A549 (cell line): ENCODE measurements at regions of chr2 and their contacts with region 1.

Region 1: DNA sequence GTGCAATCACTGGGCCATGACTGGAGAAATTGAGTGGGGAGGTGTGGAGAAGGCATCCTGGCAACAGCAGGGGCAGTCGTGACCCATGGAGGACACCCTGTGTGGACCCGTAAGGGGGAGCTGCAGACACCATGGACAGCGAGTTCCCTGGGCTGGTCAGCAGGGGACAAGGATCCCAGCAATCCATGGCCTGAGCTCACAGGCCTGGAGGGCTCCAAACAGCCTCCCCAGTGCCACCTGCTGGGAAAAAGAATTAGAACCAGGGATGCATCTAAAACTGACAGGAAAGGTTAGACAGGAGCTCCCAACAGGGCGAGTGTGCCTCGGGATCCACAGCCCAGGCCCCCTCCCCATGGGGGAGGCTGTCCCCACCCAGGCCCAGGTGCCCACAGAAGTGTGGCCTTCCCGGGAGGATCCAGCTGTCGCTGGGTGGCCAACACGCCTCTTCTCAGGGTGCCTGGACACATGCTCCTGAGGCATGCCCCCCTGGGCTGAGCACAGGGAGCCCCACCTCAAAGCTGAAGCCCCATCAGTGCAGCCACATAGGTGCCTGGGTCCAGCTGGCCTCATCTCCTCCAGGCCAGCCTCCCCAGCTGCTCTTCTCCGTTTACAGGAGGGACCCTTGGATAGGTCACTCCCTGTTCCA is 20.5 kb upstream of the KIF1A start:
- DNase-seq: peak; percentile 80 to 82
- ATAC-seq: peak; percentile 86 to 95
- H3K4me3 ChIP-seq: no peak overlapping the region
- H3K27ac ChIP-seq: no peak overlapping the region
- H3K4me1 ChIP-seq: 0 out of 3 replicates have a peak, but pooled peaks cover 3% of the 10 kb centered on the region
- CTCF ChIP-seq: peak; percentile 69
- EP300 ChIP-seq: no peak
- POLR2A ChIP-seq: no peak
- RAD21 ChIP-seq: peak; percentile 69 to 80

Region 2: DNA sequence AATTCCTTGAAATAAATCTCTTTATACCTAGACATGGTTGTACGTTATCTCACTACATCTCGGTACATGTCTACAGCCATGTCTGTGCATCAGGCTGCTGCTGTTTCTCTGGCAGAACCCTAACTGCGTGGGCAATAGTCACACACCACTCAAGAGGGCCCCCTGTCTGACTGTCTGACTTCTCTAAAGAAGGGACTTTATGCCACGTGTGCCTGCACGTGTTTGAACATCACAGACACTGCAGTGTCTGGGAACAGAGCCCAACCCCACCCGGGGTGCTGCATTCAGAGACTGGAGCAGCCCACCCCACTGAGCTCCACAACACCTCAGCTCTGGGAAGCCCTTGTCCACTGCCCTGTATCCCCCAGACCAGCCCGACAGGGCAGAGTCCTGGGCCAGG is 75.6 kb before region 1 on chr2:
- CTCF ChIA-PET with region 1: no interaction called
- POLR2A ChIA-PET with region 1: no interaction called
- DNase-seq: no peak
- ATAC-seq: no peak
- H3K4me3 ChIP-seq: no peak overlapping the region
- H3K27ac ChIP-seq: no peak overlapping the region
- H3K4me1 ChIP-seq: no peaks in the 10 kb centered on the region
- CTCF ChIP-seq: no peak
- EP300 ChIP-seq: no peak
- POLR2A ChIP-seq: no peak
- RAD21 ChIP-seq: no peak

Region 3: DNA sequence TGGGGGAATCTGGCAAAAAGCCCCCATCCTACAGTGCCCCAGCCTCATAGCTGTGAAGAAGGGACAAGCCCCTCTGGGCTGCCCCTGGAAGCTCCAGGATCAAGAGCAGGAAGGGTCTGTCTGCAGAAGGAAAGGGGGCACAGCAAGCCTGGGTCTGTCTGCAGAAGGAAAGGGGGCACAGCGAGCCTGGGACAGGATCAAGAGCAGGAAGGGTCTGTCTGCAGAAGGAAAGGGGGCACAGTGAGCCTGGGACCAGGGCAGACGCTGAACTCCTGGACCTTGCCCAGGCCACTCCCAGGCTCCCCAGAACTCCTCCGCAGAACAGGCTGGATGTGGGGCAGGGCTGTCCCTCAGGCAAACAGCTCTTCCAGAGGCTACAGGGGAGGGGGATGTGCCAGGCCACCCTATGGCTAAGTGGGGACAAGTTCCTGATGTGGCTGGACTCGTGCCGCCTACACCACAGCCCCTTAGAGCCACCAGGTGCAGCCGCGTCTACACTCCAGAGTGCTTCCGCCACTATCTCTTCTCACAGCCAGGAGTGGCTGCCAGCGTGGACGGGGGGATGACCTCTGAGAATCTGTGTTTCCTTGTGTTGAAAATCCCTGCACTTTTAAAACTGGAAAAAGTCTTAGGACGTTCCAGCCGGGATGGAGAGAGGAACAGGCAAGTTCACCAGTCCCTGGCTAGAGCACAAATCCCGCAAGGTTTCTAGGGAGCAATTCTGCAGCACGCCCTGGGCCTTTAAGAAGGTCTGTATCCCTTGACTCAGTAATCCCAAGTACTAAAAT is 41.3 kb before region 1 on chr2:
- CTCF ChIA-PET with region 1: interaction called, 20 read pairs
- POLR2A ChIA-PET with region 1: no interaction called
- DNase-seq: no peak
- ATAC-seq: no peak
- H3K4me3 ChIP-seq: no peak overlapping the region
- H3K27ac ChIP-seq: no peak overlapping the region
- H3K4me1 ChIP-seq: no peaks in the 10 kb centered on the region
- CTCF ChIP-seq: no peak
- EP300 ChIP-seq: no peak
- POLR2A ChIP-seq: no peak
- RAD21 ChIP-seq: no peak

Region 4: DNA sequence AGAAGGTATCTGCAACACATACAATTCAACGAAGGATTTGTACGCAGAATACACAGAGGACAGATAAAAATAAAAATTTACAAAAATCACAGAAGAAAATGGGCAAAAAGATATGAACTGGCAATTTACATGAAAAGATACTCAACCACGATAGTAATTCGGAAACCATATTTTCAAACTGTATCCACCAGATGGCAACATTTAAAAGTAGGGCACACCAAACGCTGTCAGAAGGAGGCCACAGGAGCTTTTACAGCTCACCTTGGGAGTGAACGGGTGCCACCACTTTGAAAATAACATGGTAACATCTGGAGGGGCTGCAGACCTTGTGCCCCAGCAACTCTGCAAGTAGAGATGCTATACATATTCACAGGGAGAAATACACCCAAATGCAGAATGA is 30.4 kb before region 1 on chr2:
- CTCF ChIA-PET with region 1: interaction called, 20 read pairs
- POLR2A ChIA-PET with region 1: no interaction called
- DNase-seq: peak in 1 of 2 experiments; percentile 27
- ATAC-seq: peak in 1 of 2 experiments; percentile 70; a peak in 2 of 6 replicates
- H3K4me3 ChIP-seq: no peak overlapping the region
- H3K27ac ChIP-seq: no peak overlapping the region
- H3K4me1 ChIP-seq: no peaks in the 10 kb centered on the region
- CTCF ChIP-seq: peak; percentile 39; the same call in 2 of the 3 replicates
- EP300 ChIP-seq: no peak
- POLR2A ChIP-seq: no peak
- RAD21 ChIP-seq: 0 out of 5 replicates have a peak, but pooled peaks of 1 of the 2 experiments have one; percentile 23

Region 5: DNA sequence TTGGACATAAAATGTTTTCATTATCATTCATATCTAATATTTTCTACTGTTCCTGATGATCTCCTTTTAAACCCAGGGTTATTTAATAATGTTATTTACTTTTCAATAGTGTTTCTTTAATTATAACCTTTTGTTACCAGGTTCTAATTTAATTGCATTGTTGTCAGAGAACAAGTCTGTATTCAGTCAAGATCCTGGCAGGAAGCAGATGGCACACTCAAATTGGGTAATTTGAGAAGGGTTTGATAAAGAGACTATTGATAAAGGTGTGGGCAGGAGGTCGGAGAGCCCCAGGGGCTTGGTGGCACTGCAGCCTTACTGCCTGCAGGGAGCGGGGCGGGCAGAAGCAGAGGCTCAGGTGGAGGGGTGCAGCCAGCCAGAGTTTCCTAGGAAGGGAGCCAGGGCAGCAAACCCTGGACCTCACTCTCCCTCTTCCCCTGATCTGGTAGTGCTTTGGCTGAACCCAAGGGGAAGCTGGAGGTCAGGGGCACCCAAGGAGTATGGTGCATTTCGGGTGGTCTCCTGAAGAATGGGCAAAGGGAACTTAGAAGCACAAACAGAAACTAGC is 18.2 kb before region 1 on chr2:
- CTCF ChIA-PET with region 1: interaction called, 37 read pairs
- POLR2A ChIA-PET with region 1: no interaction called
- DNase-seq: no peak
- ATAC-seq: no peak
- H3K4me3 ChIP-seq: no peak overlapping the region
- H3K27ac ChIP-seq: no peak overlapping the region
- H3K4me1 ChIP-seq: peaks cover 22% of the 10 kb centered on the region
- CTCF ChIP-seq: no peak
- EP300 ChIP-seq: no peak
- POLR2A ChIP-seq: no peak
- RAD21 ChIP-seq: no peak

Region 6: GRCh38 chr2:241009601-241010530 is 169.3 kb after region 1 on chr2:
- CTCF ChIA-PET with region 1: no interaction called
- POLR2A ChIA-PET with region 1: no interaction called
- DNase-seq: no peak
- ATAC-seq: peak in 1 of 2 experiments; percentile 54; a peak in 3 of 6 replicates
- H3K4me3 ChIP-seq: no peak overlapping the region
- H3K27ac ChIP-seq: no peak overlapping the region
- H3K4me1 ChIP-seq: no peaks in the 10 kb centered on the region
- CTCF ChIP-seq: no peak
- EP300 ChIP-seq: no peak
- POLR2A ChIP-seq: no peak
- RAD21 ChIP-seq: no peak